Activated CD4-positive, alpha-beta memory T cell treated with anti-CD3 and anti-CD28 coated beads for 36 hours (primary cell): ENCODE measurements at regions of chr11 and their contacts with region 1.

Region 1: GRCh38 chr11:124070915-124071635 is 29.9 kb upstream of the OR10G7 start:
- DNase-seq: peak; percentile 79
- H3K4me3 Mint-ChIP-seq: no peak overlapping the region
- H3K27ac Mint-ChIP-seq: no peak overlapping the region
- H3K4me1 Mint-ChIP-seq: peaks cover 8% of the 10 kb centered on the region
- H3K27me3 Mint-ChIP-seq: peaks cover 24% of the 10 kb centered on the region

Region 2: GRCh38 chr11:123741159-123742028 is 329.7 kb before region 1 on chr11 and contains the start of gene ZNF202:
- CTCF ChIA-PET with region 1: no interaction called
- POLR2A ChIA-PET with region 1: interaction called, 3 read pairs
- intact Hi-C with region 1: loop called (anchors 10 kb)
- DNase-seq: peak; percentile 95
- H3K4me3 Mint-ChIP-seq: peak within 1 kb of the TSS; percentile 97
- H3K27ac Mint-ChIP-seq: peak within 1 kb of the TSS; percentile 83
- H3K4me1 Mint-ChIP-seq: peaks cover 34% of the 10 kb centered on the region
- H3K27me3 Mint-ChIP-seq: no peaks in the 10 kb centered on the region
- total RNA-seq, gene ZNF202: 7.8 to 7.9 TPM

Region 3: GRCh38 chr11:124081483-124081882 is 10.4 kb after region 1 on chr11:
- CTCF ChIA-PET with region 1: interaction called, 10 read pairs
- POLR2A ChIA-PET with region 1: no interaction called
- intact Hi-C with region 1: no loop called
- DNase-seq: no peak
- H3K4me3 Mint-ChIP-seq: no peak overlapping the region
- H3K27ac Mint-ChIP-seq: no peak overlapping the region
- H3K4me1 Mint-ChIP-seq: peaks cover 3% of the 10 kb centered on the region
- H3K27me3 Mint-ChIP-seq: peaks cover 25% of the 10 kb centered on the region

Region 4: DNA sequence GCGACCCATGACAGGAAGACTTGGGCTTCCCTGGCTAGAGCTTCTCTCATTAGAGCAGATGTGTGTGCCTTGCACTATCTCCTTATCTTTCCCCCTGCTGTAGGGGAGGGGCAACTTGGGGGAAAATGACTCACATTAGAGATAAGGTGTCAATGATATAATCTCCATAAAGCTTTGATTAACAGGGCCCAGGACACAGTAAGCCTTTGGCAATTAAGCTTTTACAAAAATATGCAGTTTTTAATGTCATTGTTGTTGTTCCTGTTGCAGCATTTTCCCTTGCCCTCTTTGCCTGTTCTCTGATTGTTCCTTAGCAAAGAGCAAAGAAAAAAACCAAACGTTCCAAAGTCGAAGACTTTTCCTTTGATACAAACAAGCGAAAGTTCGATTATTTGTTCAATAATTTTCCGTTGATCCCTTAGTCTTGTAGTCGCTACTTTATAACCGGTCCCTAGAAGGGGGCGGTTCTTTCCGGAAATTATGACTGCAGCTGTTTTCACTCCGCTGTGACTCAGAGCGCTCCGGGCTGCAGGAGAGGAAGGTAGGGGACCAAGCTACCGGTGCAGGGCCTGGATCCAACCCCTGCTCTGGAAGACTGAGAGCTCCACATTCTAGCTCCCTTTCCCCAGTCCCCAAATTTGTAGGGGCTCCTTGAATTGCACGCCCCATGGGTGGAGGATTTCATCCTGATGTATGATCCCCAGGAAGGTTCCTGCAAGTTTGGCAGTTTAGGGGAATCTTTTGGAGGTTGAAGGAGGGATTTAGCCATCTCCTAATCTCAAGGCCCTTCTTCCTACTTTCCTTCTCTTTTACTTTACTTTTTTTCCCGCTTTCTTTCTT is 44.1 kb after region 1 on chr11 and contains the start of gene VWA5A:
- CTCF ChIA-PET with region 1: interaction called, 9 read pairs
- POLR2A ChIA-PET with region 1: no interaction called
- intact Hi-C with region 1: loop called (anchors 1 kb)
- DNase-seq: peak; percentile 89
- H3K4me3 Mint-ChIP-seq: peak within 1 kb of the TSS; percentile 85
- H3K27ac Mint-ChIP-seq: peak within 1 kb of the TSS; percentile 76
- H3K4me1 Mint-ChIP-seq: peaks cover 15% of the 10 kb centered on the region
- H3K27me3 Mint-ChIP-seq: peaks cover 2% of the 10 kb centered on the region
- total RNA-seq, gene VWA5A: 6.9 to 7.5 TPM

Region 5: DNA sequence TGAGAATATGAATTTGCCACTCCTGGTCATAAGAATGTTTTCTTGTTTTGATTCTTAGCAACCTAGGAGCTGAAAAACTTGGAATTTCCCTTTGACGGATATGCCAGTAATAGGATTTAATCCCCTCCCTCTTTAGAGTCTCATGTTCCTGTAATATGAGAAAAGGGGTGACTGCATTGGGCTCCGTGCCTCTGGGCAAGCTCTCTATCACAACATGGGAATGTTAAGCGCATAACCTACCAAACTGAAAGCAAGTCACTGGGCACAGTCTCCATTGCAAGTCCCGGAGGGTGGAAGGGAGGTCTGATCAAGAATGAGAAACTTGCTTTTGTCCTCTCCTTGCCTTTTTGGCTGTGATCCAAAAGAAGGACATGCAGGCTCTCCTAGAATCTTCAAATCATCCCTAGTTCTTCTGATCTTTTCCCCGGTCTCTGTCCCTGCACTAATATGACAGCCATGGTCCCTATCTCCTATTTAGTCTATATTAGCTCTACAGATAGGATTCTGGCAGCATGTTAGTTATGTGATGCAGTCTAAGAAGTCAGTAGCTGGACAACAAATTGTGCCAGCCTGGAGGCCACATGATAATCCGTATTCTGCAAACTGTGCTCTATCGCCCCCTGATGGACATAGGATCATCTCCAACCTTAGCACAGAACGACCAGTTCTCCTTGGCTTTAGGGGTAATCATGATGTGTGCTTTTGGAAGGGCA is 123.8 kb after region 1 on chr11:
- CTCF ChIA-PET with region 1: interaction called, 94 read pairs
- POLR2A ChIA-PET with region 1: no interaction called
- intact Hi-C with region 1: loop called (anchors 1 kb)
- DNase-seq: peak; percentile 58
- H3K4me3 Mint-ChIP-seq: no peak overlapping the region
- H3K27ac Mint-ChIP-seq: no peak overlapping the region
- H3K4me1 Mint-ChIP-seq: no peaks in the 10 kb centered on the region
- H3K27me3 Mint-ChIP-seq: peaks cover 10% of the 10 kb centered on the region

Region 6: GRCh38 chr11:124277804-124278203 is 206.7 kb after region 1 on chr11:
- CTCF ChIA-PET with region 1: no interaction called
- POLR2A ChIA-PET with region 1: no interaction called
- intact Hi-C with region 1: loop called (anchors 5 kb)
- DNase-seq: no peak
- H3K4me3 Mint-ChIP-seq: no peak overlapping the region
- H3K27ac Mint-ChIP-seq: no peak overlapping the region
- H3K4me1 Mint-ChIP-seq: no peaks in the 10 kb centered on the region
- H3K27me3 Mint-ChIP-seq: no peaks in the 10 kb centered on the region

Region 7: GRCh38 chr11:124586238-124586860 is 515.3 kb after region 1 on chr11:
- CTCF ChIA-PET with region 1: interaction called, 7 read pairs
- POLR2A ChIA-PET with region 1: no interaction called
- intact Hi-C with region 1: loop called (anchors 5 kb)
- DNase-seq: peak; percentile 57
- H3K4me3 Mint-ChIP-seq: no peak overlapping the region
- H3K27ac Mint-ChIP-seq: no peak overlapping the region
- H3K4me1 Mint-ChIP-seq: no peaks in the 10 kb centered on the region
- H3K27me3 Mint-ChIP-seq: peaks cover 15% of the 10 kb centered on the region